Lower lobe of right lung (tissue), 2 donors: ENCODE measurements at regions of chr3 and their contacts with region 1.

Region 1: DNA sequence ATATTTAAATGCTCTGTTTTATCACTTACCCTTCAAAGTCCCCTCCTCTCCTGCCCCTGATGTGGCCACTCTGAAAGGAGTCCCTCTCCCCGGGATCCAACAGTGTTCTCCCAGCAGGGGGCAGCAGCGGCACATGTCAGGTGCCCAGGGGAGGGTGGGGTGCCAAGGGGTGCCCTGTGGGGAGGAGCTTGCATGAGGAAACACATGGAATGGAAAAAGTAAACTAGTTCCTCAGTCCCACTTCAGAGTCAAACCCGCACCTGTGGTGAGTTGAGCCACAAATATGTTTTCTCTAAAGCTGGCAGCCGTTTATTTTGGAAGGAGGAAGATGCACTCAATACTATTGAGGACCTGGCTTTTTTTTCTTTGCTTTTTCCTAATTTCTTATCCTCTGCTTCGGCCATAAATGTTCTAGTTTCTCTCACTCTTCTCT is 30.1 kb upstream of the NRROS start:
- DNase-seq: peak; percentile 94
- ATAC-seq: peak; percentile 98 to 99
- H3K4me3 ChIP-seq: no peak overlapping the region
- H3K27ac ChIP-seq: peak overlapping the region; percentile 0
- H3K4me1 ChIP-seq: peaks cover 28% of the 10 kb centered on the region
- H3K27me3 ChIP-seq: no peaks in the 10 kb centered on the region
- CTCF ChIP-seq: peak; percentile 90

Region 2: GRCh38 chr3:196274585-196274984 is 334.8 kb before region 1 on chr3:
- intact Hi-C with region 1: no loop called
- DNase-seq: no peak
- ATAC-seq: peak in 1 of 2 donors; percentile 26
- H3K4me3 ChIP-seq: no peak overlapping the region
- H3K27ac ChIP-seq: peak overlapping the region; percentile 13
- H3K4me1 ChIP-seq: peaks cover 29% of the 10 kb centered on the region
- H3K27me3 ChIP-seq: no peaks in the 10 kb centered on the region
- CTCF ChIP-seq: no peak

Region 3: GRCh38 chr3:196444500-196444894 is 164.9 kb before region 1 on chr3:
- intact Hi-C with region 1: no loop called
- DNase-seq: no peak
- ATAC-seq: no peak
- H3K4me3 ChIP-seq: no peak overlapping the region
- H3K27ac ChIP-seq: no peak overlapping the region
- H3K4me1 ChIP-seq: no peaks in the 10 kb centered on the region
- H3K27me3 ChIP-seq: no peaks in the 10 kb centered on the region
- CTCF ChIP-seq: no peak

Region 4: DNA sequence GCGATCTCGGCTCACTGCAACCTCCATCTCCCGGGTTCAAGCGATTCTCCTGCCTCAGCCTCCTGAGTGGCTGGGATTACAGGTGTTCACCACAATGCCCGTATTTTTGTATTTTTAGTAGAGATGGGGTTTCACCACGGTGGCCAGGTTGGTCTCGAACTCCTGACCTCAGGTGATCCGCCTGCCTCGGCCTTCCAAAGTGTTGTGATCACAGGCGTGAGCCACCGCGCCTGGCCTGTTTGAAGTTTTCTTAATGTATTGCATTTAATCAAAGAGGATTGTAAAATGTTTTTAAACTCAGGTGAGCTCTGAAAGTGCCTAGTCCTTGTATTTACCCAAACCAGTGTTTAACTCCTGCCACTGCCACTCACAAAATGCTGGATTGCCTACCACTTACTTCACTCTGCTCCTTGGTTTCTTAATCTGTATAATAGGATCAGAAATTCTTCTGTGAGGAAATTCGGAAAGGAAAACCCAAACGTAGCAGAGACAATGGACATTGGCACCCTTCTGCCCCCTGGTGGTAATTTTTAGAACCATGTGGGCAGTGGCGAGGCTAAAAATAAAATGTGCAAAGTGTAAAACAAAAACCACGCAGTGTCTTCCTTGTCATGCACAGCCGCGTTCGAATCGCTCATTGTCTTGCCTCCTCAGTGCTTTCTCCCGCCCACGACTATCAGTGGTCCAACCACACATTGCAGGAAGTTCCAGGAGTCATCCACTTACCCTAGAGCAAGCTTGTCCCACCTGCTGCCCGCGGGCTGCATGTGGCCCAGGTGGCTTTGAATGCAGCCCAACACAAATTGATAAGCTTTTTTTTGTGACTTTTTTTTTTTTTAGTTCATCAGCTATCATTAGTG is 75.4 kb after region 1 on chr3:
- intact Hi-C with region 1: loop called (anchors 5 kb)
- DNase-seq: peak; percentile 60
- ATAC-seq: peak; percentile 79 to 85
- H3K4me3 ChIP-seq: peak overlapping the region; percentile 19
- H3K27ac ChIP-seq: no peak overlapping the region
- H3K4me1 ChIP-seq: peaks cover 11% of the 10 kb centered on the region
- H3K27me3 ChIP-seq: no peaks in the 10 kb centered on the region
- CTCF ChIP-seq: peak; percentile 93

Region 5: GRCh38 chr3:196694941-196695848 is 85.8 kb after region 1 on chr3:
- intact Hi-C with region 1: no loop called
- DNase-seq: no peak
- ATAC-seq: peak; percentile 14 to 47
- H3K4me3 ChIP-seq: no peak overlapping the region
- H3K27ac ChIP-seq: no peak overlapping the region
- H3K4me1 ChIP-seq: peaks cover 6% of the 10 kb centered on the region
- H3K27me3 ChIP-seq: no peaks in the 10 kb centered on the region
- CTCF ChIP-seq: no peak